Calu3 (cell line): ENCODE measurements at regions of chr4 and their contacts with region 1.

Region 1: DNA sequence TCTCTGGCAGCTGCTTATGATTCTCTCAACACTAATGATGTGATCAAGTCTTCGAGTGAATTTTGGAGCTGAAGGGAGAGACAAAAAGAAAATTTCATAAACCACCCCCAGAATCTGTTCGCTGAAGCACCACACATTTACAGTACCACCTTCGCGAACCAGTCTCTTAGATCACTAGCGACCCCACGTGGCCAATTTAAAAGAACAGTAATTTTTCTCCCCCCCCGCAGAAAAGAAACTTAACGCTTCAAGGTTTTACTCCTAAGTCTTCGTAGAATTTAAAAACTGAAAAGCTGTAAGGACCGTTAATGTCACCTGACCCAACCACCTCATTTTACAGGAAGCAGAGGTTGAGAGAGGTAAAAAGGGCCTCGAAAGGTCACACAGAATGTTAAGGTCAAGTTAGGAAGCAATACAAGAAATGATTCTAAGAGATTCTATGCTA is 187.5 kb downstream of the QDPR start:
- DNase-seq: peak; percentile 32
- H3K4me3 Mint-ChIP-seq: no peak overlapping the region
- H3K27ac Mint-ChIP-seq: no peak overlapping the region
- H3K4me1 Mint-ChIP-seq: no peaks in the 10 kb centered on the region
- H3K27me3 Mint-ChIP-seq: peaks cover 10% of the 10 kb centered on the region
- CTCF ChIP-seq: peak; percentile 58

Region 2: DNA sequence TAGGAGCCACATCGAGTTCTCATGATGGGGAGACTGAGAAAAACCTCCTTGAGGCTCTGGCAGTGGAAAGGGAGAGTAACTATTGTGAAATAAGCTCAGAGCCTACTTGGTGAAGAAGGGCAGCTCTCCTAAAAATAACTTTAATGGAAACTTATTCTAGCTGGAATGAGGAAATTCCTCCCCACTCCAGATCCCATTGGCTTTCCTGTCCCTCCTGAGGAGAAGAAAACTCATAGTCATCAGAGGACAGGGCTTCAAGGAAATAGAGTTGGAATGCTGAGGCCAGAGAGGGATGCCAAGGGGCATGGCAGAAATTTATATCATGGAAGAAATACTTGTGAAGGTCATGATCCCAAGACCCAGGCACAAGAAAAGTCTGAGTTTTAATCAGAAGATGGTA is 1027.4 kb before region 1 on chr4:
- CTCF ChIA-PET with region 1: no interaction called
- intact Hi-C with region 1: loop called (anchors 5 kb)
- DNase-seq: no peak
- H3K4me3 Mint-ChIP-seq: no peak overlapping the region
- H3K27ac Mint-ChIP-seq: no peak overlapping the region
- H3K4me1 Mint-ChIP-seq: no peaks in the 10 kb centered on the region
- H3K27me3 Mint-ChIP-seq: no peaks in the 10 kb centered on the region
- CTCF ChIP-seq: no peak

Region 3: DNA sequence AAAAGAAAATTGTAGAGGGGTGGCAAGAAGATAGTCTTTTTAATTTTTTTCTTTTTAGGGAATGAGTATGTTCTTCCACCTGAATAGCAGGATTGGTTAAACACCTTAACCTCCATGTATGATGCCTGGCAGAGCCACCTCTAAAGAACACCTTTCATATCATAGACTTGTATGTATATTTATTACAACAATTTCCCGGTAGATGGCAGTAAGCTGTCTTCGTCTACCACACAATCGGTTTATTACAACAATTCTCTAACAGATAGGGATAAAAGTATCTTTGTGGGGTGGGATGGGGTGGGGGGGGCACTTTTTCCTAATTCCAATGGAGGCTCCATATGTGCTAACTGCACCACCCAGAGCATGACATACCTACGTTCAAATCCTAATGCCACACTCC is 681.5 kb before region 1 on chr4:
- CTCF ChIA-PET with region 1: no interaction called
- intact Hi-C with region 1: loop called (anchors 1 kb)
- DNase-seq: no peak
- H3K4me3 Mint-ChIP-seq: no peak overlapping the region
- H3K27ac Mint-ChIP-seq: no peak overlapping the region
- H3K4me1 Mint-ChIP-seq: no peaks in the 10 kb centered on the region
- H3K27me3 Mint-ChIP-seq: peaks cover 14% of the 10 kb centered on the region
- CTCF ChIP-seq: peak; percentile 6